Natural killer cell (primary cell): ENCODE measurements at regions of chr1 and their contacts with region 1.

Region 1: DNA sequence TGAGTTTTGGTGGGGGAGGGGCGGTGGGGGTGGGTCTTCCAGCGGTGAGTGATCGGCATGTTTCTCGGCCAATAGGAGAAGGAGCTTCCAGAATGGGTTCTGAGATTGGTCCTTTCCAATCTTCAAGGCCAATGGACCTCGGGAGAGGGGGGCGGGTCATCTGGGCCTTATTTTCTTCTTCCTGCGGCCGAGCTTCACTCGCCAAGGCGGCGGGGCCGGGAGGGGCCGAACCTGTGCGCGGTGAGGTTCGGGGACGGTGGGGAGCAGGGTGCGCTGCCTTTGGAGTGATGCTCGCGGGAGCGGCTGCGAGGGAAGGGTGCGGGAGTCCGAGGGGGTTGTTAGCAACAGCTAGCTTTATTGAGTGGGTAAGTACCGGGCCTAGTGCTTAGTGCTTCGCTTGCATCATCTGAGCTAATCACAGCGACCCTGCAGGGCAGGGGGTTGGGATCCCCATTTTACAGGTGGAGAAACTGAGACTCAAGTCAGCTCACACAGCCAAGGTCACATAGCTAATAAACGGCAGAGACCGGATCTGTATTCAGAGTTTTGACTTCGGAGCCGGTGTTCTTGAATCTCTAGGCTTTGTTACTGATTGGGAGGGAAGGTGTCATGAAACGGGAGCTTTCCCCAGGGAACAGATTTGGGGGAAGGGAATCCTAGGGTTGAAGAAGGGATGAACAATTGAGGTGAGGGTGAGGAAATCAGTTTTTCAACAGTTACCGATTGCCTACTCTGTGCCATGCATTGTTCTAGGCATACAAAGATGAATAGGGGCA is 549 bp downstream of the KDM4A start:
- DNase-seq: peak; percentile 85 to 97
- ATAC-seq: peak; percentile 76 to 86 (median 77)
- H3K4me3 ChIP-seq: peak overlapping the region; percentile 76
- H3K4me3 Mint-ChIP-seq: peak overlapping the region; percentile 99
- H3K27ac ChIP-seq: peak overlapping the region; percentile 83
- H3K27ac Mint-ChIP-seq: peak overlapping the region; percentile 96 to 97
- H3K4me1 ChIP-seq: peaks cover 19% of the 10 kb centered on the region
- H3K4me1 Mint-ChIP-seq: peaks cover 32 to 38% of the 10 kb centered on the region in 2 donors
- H3K27me3 ChIP-seq: no peaks in the 10 kb centered on the region
- H3K27me3 Mint-ChIP-seq: peaks cover 1 to 6% of the 10 kb centered on the region in 2 donors
- CTCF ChIP-seq: no peak

Region 2: GRCh38 chr1:43706598-43707495 is 56.3 kb after region 1 on chr1:
- intact Hi-C with region 1: loop called (anchors 2 kb)
- DNase-seq: peak; percentile 89 to 94
- ATAC-seq: peak; percentile 97 to 98 (median 97)
- H3K4me3 ChIP-seq: peak overlapping the region; percentile 90
- H3K4me3 Mint-ChIP-seq: peak overlapping the region; percentile 85
- H3K27ac ChIP-seq: peak overlapping the region; percentile 34
- H3K27ac Mint-ChIP-seq: peak overlapping the region; percentile 38 to 78
- H3K4me1 ChIP-seq: peaks cover 17% of the 10 kb centered on the region
- H3K4me1 Mint-ChIP-seq: peaks cover 18 to 24% of the 10 kb centered on the region in 2 donors
- H3K27me3 ChIP-seq: no peaks in the 10 kb centered on the region
- H3K27me3 Mint-ChIP-seq: no peaks in the 10 kb centered on the region
- CTCF ChIP-seq: no peak